ENCODE measurements at regions of chr14 and their contacts with region 1.

Region 1: DNA sequence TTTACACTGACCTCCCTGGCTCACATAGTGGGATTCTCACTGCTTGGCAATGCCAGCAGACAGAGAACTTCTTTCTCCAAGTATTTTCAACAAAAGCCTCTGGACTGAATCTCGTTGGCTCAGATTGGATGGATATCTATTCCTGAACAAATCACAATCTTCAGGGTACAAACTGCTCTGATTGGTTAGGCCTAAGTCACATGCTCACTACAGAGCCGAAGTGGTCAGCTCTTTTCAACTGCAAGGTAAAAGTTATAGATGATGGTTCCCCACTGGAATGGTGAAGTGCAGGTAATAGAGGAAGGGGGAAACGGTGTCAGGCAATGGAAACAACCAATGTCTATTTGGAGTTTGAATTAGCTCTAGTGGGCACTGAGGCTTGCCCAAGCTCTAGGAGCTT is 16.7 kb upstream of the VRK1 start:
- DNase-seq: no peak
- CTCF ChIP-seq: no peak

Region 2: GRCh38 chr14:96792003-96792402 is 11.5 kb after region 1 on chr14:
- CTCF ChIA-PET with region 1: interaction called, 10 read pairs
- POLR2A ChIA-PET with region 1: no interaction called
- DNase-seq: no peak
- CTCF ChIP-seq: no peak

Region 3: DNA sequence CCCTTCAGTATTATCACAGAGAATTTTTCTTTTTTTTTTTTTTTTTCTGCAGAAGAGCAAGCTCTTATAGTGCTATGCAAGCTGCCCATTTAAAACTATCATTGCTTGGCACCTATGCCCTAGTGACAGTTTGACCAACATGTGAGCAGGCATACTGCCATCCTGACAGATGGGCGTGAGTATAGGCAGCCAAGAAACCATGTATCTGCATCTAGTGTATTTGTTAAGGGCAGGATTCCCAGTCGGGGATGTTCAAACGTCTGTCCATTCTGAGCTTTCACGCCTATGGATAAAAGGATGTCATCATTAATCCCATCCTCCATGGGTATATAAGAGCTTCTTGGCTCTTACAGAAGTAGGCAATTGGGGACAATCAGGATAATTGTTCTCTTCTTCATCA is 25.5 kb after region 1 on chr14:
- CTCF ChIA-PET with region 1: no interaction called
- POLR2A ChIA-PET with region 1: no interaction called
- DNase-seq: no peak
- CTCF ChIP-seq: no peak